Posterior vena cava (tissue), 2 donors: ENCODE measurements at regions of chr14 and their contacts with region 1.

Region 1: GRCh38 chr14:92959189-92959531 is 36.2 kb downstream of the CHGA start:
- DNase-seq: no peak

Region 2: GRCh38 chr14:92589213-92589852 is 369.8 kb before region 1 on chr14:
- intact Hi-C with region 1: no loop called
- DNase-seq: no peak

Region 3: GRCh38 chr14:92990456-92991430 is 31.6 kb after region 1 on chr14:
- intact Hi-C with region 1: loop called in 1 of 2 experiments (anchors 1 kb)
- DNase-seq: peak; percentile 58